ENCODE measurements at regions of chr15 and their contacts with region 1.

Region 1: DNA sequence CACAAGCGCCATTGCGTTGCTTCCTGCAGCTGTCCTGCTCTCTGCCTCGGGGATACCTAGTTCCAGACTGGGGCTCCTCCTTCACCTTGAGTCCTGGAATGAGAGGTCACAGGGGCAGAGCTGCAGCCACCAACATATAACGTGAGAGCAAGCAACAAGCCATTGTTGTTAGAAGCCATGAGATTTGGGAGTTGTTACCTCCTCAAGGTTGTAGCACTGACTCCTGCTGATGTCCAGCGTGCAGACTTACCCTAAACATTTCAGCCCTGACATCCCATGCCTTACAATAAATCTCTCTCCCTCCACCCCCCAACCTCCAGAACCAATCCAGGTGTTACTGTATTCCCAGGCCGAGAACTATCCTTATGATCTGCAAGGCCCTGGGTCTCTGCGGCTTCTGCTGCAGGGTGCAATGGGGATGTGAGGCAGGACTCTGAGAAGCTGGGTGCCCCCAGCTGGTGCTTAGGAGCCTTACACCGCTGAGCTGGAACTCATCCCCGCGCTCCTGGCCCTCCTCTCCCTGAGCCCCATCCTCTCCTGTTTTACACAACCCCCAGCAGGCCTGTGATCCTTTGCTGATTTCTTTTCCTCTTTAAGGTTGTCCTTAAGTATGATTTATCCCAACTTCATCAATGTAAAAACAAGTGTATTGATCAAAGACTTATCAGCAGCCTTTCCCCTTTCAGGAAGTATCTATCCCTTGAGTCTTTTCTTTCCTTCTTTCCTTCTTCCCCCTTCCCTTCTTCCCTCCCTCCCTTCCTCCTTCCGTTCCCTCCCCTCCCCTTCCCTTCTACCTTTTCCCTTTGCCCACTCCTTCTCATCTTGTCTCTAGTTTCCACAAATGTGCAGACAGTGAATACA is 84.2 kb upstream of the ABHD2 start:
- DNase-seq: peak; percentile 28 to 75
- H3K4me3 ChIP-seq: no peak overlapping the region
- H3K27ac ChIP-seq: no peak overlapping the region
- H3K4me1 ChIP-seq: peaks cover 0 to 9% (median 7%) of the 10 kb centered on the region in 4 donors
- H3K27me3 ChIP-seq: no peaks in the 10 kb centered on the region
- CTCF ChIP-seq: peak; percentile 52 to 60

Region 2: DNA sequence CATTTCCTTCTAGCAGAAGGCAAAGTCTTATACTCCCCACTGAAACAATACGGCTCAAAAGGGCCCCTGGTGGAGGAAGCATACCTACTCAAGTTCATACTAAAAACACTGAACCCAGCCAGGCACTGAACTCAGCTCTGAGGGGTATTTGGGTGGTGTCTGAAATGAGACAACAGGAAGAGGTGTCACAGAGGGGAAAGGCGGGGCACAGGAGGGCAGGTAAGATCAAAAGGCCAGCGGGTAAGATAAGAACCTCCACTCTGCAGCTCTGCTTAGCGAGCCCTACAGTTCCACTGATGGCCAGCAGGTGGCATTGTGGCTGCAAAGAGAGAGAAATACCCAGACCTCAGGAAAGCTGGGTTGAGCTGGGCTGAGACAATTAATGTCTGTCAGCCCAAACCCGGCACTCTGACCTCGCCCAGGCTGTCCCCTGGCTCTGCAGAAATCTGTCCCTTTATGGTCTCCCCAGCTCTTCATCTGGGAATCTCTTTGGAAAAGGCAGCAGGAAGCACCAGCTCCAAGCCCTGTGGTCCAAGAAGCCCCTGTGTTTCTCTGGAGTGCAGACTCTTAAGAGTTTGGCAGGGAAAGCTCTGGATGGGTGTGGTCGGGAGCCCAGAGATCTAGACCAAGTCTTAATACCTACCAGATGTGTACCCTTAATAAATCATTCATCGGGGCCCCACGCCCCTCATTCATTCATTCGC is 99.3 kb before region 1 on chr15:
- intact Hi-C with region 1: loop called (anchors 5 kb)
- DNase-seq: peak; percentile 88 to 90
- H3K4me3 ChIP-seq: no peak overlapping the region
- H3K27ac ChIP-seq: peak overlapping the region; percentile 58 to 87
- H3K4me1 ChIP-seq: peaks cover 6 to 100% (median 76%) of the 10 kb centered on the region in 4 donors
- H3K27me3 ChIP-seq: no peaks in the 10 kb centered on the region
- CTCF ChIP-seq: peak; percentile 98 to 100

Region 3: GRCh38 chr15:88954431-88955277 is 49.4 kb before region 1 on chr15:
- intact Hi-C with region 1: no loop called
- DNase-seq: peak; percentile 68 to 94
- H3K4me3 ChIP-seq: no peak overlapping the region
- H3K27ac ChIP-seq: peak overlapping the region; percentile 81 to 83
- H3K4me1 ChIP-seq: peaks cover 5 to 20% (median 13%) of the 10 kb centered on the region in 4 donors
- H3K27me3 ChIP-seq: no peaks in the 10 kb centered on the region
- CTCF ChIP-seq: no peak